Activated B cell treated with CpG ODN at 0.5 μM for 24 hours (primary cell): ENCODE measurements at regions of chr1 and their contacts with region 1.

Region 1: GRCh38 chr1:35726450-35727433 is 8.1 kb upstream of the C1orf216 start:
- DNase-seq: peak; percentile 32
- ATAC-seq: peak; percentile 92
- H3K4me3 Mint-ChIP-seq: no peak overlapping the region
- H3K27ac Mint-ChIP-seq: no peak overlapping the region
- H3K4me1 Mint-ChIP-seq: peaks cover 5% of the 10 kb centered on the region
- H3K27me3 Mint-ChIP-seq: no peaks in the 10 kb centered on the region
- CTCF ChIP-seq: no peak

Region 2: GRCh38 chr1:35202048-35202719 is 524.6 kb before region 1 on chr1:
- CTCF ChIA-PET with region 1: no interaction called
- POLR2A ChIA-PET with region 1: no interaction called
- intact Hi-C with region 1: loop called (anchors 5 kb)
- DNase-seq: peak; percentile 30
- ATAC-seq: peak; percentile 100
- H3K4me3 Mint-ChIP-seq: no peak overlapping the region
- H3K27ac Mint-ChIP-seq: no peak overlapping the region
- H3K4me1 Mint-ChIP-seq: peaks cover 5% of the 10 kb centered on the region
- H3K27me3 Mint-ChIP-seq: no peaks in the 10 kb centered on the region
- CTCF ChIP-seq: peak; percentile 58

Region 3: DNA sequence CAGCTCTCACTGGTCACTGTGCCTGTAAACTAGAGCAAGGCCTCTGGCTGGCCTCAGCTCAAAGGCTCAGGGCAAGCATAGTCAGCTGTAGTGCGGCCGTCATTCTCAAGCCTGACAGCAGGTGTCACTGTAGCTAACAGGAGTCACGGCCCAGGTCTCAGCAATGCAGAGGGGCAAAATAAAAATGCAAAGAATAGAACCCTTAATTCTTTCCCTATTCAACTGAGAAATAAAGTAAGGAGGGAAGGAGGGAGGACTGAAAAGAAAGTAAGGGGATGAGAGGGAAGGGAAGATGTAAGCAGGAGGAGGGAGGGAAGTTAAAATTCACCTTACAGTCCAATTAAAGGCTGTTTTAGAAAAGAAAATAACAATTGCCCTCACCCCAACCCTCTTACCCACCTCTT is 275.6 kb before region 1 on chr1:
- CTCF ChIA-PET with region 1: interaction called, 32 read pairs
- POLR2A ChIA-PET with region 1: no interaction called
- intact Hi-C with region 1: loop called (anchors 1 kb)
- DNase-seq: peak; percentile 48
- ATAC-seq: peak; percentile 87
- H3K4me3 Mint-ChIP-seq: no peak overlapping the region
- H3K27ac Mint-ChIP-seq: no peak overlapping the region
- H3K4me1 Mint-ChIP-seq: no peaks in the 10 kb centered on the region
- H3K27me3 Mint-ChIP-seq: no peaks in the 10 kb centered on the region
- CTCF ChIP-seq: no peak

Region 4: GRCh38 chr1:35564037-35564883 is 162.5 kb before region 1 on chr1:
- CTCF ChIA-PET with region 1: interaction called, 59 read pairs
- POLR2A ChIA-PET with region 1: no interaction called
- intact Hi-C with region 1: loop called (anchors 1 kb)
- DNase-seq: peak; percentile 60
- ATAC-seq: peak; percentile 82
- H3K4me3 Mint-ChIP-seq: no peak overlapping the region
- H3K27ac Mint-ChIP-seq: no peak overlapping the region
- H3K4me1 Mint-ChIP-seq: peaks cover 4% of the 10 kb centered on the region
- H3K27me3 Mint-ChIP-seq: no peaks in the 10 kb centered on the region
- CTCF ChIP-seq: peak; percentile 55

Region 5: GRCh38 chr1:35569936-35570335 is 156.8 kb before region 1 on chr1:
- CTCF ChIA-PET with region 1: interaction called, 59 read pairs
- POLR2A ChIA-PET with region 1: interaction called, 5 read pairs
- intact Hi-C with region 1: loop called (anchors 1 kb)
- DNase-seq: no peak
- ATAC-seq: no peak
- H3K4me3 Mint-ChIP-seq: no peak overlapping the region
- H3K27ac Mint-ChIP-seq: peak overlapping the region; percentile 38
- H3K4me1 Mint-ChIP-seq: no peaks in the 10 kb centered on the region
- H3K27me3 Mint-ChIP-seq: peaks cover 19% of the 10 kb centered on the region
- CTCF ChIP-seq: no peak

Region 6: GRCh38 chr1:35660581-35661473 is 65.9 kb before region 1 on chr1:
- CTCF ChIA-PET with region 1: no interaction called
- POLR2A ChIA-PET with region 1: no interaction called
- intact Hi-C with region 1: no loop called
- DNase-seq: no peak
- ATAC-seq: no peak
- H3K4me3 Mint-ChIP-seq: no peak overlapping the region
- H3K27ac Mint-ChIP-seq: no peak overlapping the region
- H3K4me1 Mint-ChIP-seq: no peaks in the 10 kb centered on the region
- H3K27me3 Mint-ChIP-seq: peaks cover 12% of the 10 kb centered on the region
- CTCF ChIP-seq: no peak

Region 7: DNA sequence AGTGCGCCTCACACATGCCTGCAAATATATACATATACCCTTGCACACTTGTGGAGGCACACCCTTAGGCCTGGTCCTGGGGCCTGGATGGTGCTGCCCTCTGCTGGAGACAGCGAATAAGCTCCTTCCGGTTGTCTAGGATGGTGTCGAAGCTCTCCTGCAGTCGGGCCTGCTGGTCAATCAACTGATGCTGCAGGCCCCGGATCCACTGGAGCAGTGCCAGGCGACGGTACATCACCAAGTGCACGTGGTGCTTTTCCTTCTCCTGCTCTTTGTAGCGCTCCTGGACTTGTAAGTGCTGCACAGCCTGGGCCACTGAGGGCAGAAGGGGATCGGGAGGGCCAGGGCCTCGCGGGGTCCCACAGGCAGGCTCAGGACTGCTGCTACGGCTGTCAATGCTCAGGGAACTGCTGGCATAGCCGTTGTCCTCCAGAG is 11.2 kb before region 1 on chr1:
- CTCF ChIA-PET with region 1: interaction called, 57 read pairs
- POLR2A ChIA-PET with region 1: no interaction called
- intact Hi-C with region 1: no loop called
- DNase-seq: peak; percentile 56
- ATAC-seq: peak; percentile 67
- H3K4me3 Mint-ChIP-seq: peak overlapping the region; percentile 32
- H3K27ac Mint-ChIP-seq: no peak overlapping the region
- H3K4me1 Mint-ChIP-seq: peaks cover 28% of the 10 kb centered on the region
- H3K27me3 Mint-ChIP-seq: no peaks in the 10 kb centered on the region
- CTCF ChIP-seq: no peak